SK-MEL-5 (cell line): ENCODE measurements at regions of chr3 and their contacts with region 1.

Region 1: DNA sequence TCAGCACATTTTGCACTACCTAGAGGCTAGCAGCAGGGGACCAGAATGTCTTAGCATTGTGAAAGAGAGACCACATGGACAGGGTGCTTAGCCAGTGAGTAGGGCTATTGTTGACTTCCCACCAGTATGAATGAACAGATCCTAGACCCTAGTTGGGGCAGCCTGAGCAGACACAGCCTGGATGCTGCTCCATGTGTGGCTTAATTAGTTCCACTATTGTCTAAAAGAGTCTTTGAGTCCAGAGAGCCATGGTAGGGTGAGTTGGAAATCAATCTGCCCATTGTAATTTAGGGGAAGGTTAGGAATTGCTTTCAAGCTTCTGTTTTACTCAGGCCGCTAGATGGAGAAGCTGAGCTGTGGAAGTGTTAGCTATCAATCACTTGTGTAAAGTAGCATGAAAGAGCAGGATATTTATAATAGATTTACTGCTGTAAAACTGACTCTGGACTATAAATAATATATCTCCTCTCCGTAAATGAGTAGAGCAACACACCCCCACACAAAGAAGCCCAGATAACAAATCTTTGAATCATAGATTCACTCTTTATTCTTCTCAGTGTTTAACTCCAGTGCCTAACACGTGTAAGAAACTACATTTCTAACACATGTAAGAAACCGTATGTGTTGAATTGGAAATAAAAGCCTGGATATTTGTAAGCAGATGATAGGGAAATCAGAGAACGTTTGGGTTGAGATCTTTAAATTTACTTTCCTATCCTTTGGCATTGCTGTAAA is 4.1 kb upstream of the GCSAM start:
- DNase-seq: peak; percentile 92

Region 2: DNA sequence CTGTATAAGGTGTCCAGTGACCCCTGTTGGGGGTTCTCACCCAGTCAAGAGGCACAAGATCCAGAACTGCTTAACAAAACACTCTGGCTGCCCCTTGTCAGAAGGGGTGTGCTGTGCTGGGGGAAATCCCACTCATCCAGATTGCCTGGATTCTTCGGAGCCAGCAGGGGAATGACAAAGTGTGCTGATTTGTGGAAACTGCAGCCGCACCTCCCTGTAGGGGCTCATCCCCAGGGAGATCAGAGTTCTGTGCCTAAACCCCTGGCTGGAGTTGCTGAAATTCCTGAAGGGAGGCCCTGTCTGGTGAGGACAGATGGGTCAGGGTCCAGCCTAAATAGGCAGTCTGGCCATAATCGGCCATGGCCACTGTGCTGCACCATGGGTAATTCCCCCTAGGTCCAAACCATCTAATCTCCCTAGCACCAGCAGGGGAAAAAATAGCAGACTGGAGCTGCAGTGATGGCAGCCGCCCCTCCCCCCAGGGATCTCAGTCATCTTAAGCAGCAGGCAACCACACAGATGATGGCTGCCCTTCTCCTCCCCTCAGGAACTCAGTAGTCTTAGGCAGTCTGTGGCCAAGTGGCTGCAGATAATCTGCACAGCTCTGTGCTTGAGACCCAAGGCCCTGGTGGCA is 663.7 kb before region 1 on chr3:
- in situ Hi-C with region 1: no loop called
- DNase-seq: peak; percentile 44

Region 3: GRCh38 chr3:112293368-112294321 is 156.5 kb after region 1 on chr3 and contains the start of gene SLC9C1:
- in situ Hi-C with region 1: loop called (anchors 25 kb)
- DNase-seq: peak; percentile 98
- total RNA-seq, gene SLC9C1: 0.11 and 0.64 TPM in 2 replicates